Psoas muscle (tissue), 8 donors: ENCODE measurements at regions of chr5 and their contacts with region 1.

Region 1: DNA sequence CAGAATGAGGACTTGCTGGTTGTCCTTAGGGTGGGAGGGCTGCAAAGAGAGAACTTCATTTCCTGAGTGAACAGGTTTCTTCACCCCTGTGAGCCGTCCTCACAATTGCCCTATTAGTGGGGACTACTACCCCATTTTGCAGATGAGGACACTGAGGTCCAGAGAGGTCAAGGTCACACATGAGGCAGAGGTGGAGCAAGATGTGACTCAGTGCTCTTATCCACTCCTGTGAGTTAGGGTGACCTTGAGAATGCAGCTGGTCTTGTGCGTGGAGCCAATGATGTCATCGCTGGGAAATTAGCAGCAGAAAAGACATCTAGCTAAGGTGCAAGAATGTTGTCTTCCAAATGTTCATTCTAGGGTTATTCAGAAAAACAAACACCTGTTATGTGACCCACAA is 26.9 kb downstream of the GPRIN1 start:
- DNase-seq: no peak
- ATAC-seq: no peak
- H3K4me3 ChIP-seq: no peak overlapping the region
- H3K27ac ChIP-seq: no peak overlapping the region
- H3K4me1 ChIP-seq: no peaks in the 10 kb centered on the region
- H3K27me3 ChIP-seq: peaks cover 0 to 2% (median 0%) of the 10 kb centered on the region in 3 donors
- CTCF ChIP-seq: no peak

Region 2: GRCh38 chr5:176660860-176661641 is 78.0 kb after region 1 on chr5:
- intact Hi-C with region 1: no loop called
- DNase-seq: peak; percentile 70 to 86
- ATAC-seq: peak; percentile 81 to 90 (median 84)
- H3K4me3 ChIP-seq: no peak overlapping the region
- H3K27ac ChIP-seq: no peak overlapping the region
- H3K4me1 ChIP-seq: peaks cover 7% of the 10 kb centered on the region
- H3K27me3 ChIP-seq: peaks cover 0 to 29% (median 0%) of the 10 kb centered on the region in 3 donors
- CTCF ChIP-seq: peak; percentile 97

Region 3: GRCh38 chr5:176716320-176716719 is 133.2 kb after region 1 on chr5:
- intact Hi-C with region 1: no loop called
- DNase-seq: no peak
- ATAC-seq: no peak
- H3K4me3 ChIP-seq: no peak overlapping the region
- H3K27ac ChIP-seq: no peak overlapping the region
- H3K4me1 ChIP-seq: no peaks in the 10 kb centered on the region
- H3K27me3 ChIP-seq: peaks cover 0 to 41% (median 16%) of the 10 kb centered on the region in 3 donors
- CTCF ChIP-seq: no peak

Region 4: DNA sequence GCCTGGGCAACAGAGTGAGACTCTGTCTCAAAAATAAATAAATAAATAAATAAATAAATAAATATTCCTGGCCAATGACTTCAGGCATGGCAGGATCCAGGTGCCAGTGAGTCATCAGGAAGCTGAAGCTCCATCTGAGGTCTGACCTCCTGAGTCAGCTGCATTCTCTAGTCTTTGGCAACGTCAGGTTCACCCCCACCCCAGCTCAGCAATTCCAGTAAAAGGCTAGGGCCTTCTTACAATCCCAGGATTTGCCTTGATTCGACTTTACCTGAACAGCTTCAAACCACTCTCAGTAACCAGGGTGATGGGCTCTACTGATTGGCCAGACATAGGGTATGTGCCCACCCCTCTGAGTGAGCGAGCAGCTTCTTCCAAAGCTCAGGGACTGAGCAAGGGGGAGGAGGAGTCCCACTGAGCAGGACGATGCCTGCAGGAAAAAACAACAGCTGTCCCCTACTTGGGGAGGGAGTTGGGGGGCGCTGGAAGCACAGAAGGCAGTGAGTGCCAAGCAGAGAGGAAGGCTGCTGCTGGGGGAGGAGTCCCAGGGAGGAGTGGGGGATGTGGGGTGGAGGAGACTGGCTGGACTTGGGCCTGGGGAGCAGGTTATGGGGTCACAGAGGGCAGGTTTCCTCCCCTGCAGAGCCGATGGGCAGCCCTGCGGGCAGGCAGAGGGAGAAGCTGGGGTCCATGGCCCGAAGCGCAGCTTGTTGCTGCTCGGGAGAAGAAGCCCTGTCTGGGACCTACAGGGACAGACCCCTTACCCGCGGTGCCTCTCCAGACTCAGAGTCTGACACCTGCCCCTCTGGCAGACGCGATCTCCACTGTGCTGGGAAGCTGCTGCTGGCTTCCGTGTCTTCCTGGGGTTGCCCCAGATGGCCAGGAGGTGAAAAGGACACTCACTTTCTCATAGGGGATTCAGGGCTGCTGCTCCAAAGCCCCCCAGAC is 201.4 kb after region 1 on chr5:
- intact Hi-C with region 1: loop called in 1 of 2 experiments (anchors 10 kb)
- DNase-seq: no peak
- ATAC-seq: peak in 3 of 4 donors; percentile 58 to 74 (median 59)
- H3K4me3 ChIP-seq: no peak overlapping the region
- H3K27ac ChIP-seq: no peak overlapping the region
- H3K4me1 ChIP-seq: no peaks in the 10 kb centered on the region
- H3K27me3 ChIP-seq: peaks cover 3 to 47% (median 4%) of the 10 kb centered on the region in 3 donors
- CTCF ChIP-seq: no peak